Body of pancreas (tissue), 4 donors: ENCODE measurements at regions of chr21 and their contacts with region 1.

Region 1: GRCh38 chr21:33915368-33916199 is at the start of gene ATP5PO:
- DNase-seq: peak; percentile 97 to 98 (median 98)
- ATAC-seq: peak; percentile 100
- H3K4me3 ChIP-seq: peak within 1 kb of the TSS; percentile 16 to 99
- H3K27ac ChIP-seq: peak within 1 kb of the TSS in 3 of 4 donors; percentile 68 to 84 (median 75)
- H3K4me1 ChIP-seq: peaks cover 17% of the 10 kb centered on the region
- H3K27me3 ChIP-seq: no peaks in the 10 kb centered on the region
- CTCF ChIP-seq: peak in 1 of 7 experiments; percentile 18
- POLR2A ChIP-seq: peak; percentile 58 to 88 (median 85)
- total RNA-seq, gene ATP5PO: 79.1 to 85.0 TPM

Region 2: DNA sequence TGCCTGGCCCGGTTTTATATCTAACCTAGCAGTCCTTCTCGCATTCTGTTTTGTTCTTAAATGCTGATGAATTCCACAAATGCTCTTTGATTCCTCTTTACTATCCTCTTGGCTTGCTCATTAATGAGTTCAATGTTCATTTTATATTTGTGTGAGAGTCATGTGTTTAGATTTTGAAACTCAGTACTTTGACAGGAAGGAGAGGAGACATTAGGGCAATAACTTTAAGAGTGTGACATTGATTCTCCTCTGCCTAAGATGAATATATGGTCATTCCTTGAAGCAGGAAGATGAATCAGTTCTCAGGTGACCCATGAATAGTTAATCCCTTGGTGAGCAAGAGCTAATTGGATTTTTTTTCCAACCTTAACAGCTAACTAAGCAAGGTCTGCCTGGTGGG is 241.9 kb after region 1 on chr21:
- intact Hi-C with region 1: no loop called
- DNase-seq: no peak
- ATAC-seq: no peak
- H3K4me3 ChIP-seq: no peak overlapping the region
- H3K27ac ChIP-seq: no peak overlapping the region
- H3K4me1 ChIP-seq: no peaks in the 10 kb centered on the region
- H3K27me3 ChIP-seq: no peaks in the 10 kb centered on the region
- CTCF ChIP-seq: no peak
- POLR2A ChIP-seq: no peak

Region 3: DNA sequence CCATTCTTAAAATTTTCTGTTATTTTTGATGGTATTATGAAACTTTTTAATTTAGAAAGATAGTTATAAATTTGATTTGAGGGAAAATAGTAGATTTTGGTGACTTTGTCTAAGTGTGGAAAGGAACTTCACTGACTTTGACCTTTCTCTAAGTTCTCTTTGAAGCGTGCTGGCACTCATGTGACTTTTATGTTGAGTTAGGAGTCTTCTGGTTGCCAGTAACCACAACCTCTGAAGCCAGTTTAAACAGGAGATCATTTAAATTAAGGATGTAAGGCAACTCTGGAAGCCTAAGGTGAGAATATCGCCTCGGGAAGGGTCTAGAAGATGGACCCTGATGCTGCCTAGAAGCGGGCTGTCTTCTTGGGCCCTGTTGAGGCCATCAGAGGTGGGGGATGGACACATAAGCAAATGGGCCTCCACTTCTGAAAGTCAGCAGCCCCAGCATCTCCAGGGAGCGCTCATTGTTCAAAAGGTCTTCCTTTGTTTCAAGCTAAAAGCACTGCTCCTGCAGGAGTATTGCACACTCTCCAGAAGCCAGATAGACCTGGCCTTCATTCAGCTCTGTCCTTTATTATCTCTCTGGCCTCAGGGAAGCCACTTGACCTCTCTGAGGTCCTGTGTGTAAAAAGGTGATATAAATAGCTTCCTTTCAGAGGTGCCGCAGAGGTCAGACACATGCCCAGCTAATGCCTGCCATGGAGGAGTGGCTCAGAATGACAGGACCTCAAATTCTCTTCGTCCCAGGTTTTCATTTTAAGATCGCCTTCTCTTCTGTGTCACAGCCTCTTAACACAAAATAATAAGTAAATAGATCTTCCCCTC is 704.5 kb after region 1 on chr21:
- intact Hi-C with region 1: loop called (anchors 10 kb)
- DNase-seq: no peak
- ATAC-seq: no peak
- H3K4me3 ChIP-seq: no peak overlapping the region
- H3K27ac ChIP-seq: no peak overlapping the region
- H3K4me1 ChIP-seq: no peaks in the 10 kb centered on the region
- H3K27me3 ChIP-seq: no peaks in the 10 kb centered on the region
- CTCF ChIP-seq: no peak
- POLR2A ChIP-seq: no peak